Natural killer cell (primary cell): ENCODE measurements at regions of chr15 and their contacts with region 1.

Region 1: DNA sequence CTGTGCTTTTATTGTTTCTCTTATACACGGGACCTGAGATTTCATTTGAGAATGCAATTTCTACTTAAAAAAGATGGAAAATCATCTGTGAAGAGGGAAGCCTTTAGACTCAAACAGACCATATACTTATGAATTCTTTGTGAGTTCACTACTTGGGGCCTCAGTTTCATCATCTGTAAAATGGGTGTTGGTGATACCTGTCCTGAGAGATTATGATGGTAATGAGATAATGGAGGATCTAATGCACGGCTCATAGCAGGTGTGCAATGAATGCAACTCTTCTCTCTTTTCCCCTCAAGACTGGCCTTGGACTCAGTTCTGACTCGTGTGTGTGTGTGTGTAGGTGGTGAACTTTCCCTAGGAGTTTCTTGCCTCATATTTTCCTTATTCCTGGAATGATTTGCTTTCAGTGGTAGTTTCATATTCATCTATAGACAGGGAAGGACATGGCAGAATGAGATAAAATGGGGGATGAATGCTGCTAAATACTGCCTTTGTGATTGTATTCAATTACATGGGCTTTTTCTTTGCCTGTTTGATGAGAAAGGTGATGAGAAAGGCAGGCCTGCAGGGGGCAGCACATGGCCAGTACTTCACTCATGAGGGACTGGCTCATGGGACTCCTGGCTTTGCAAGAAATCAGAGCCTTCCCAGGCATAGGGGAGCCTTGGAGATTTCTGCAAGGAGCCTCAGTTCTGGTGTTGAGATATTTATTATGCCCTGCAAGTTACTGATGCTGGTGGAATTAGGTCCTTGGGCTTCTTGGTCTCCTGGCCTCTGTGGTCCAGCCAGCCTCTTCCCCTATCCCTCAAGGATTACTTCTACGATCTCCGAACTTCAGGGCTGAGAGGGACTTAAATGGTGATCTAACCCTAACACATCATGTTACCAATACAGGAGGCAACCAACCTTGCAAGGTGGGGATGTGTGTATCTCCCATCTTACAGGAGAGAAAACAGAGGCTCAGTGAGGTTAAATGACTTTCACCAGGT is 70.7 kb downstream of the RPLP1 start:
- DNase-seq: peak; percentile 56 to 65
- ATAC-seq: peak; percentile 57 to 70 (median 67)
- H3K4me3 ChIP-seq: no peak overlapping the region
- H3K4me3 Mint-ChIP-seq: no peak overlapping the region
- H3K27ac ChIP-seq: no peak overlapping the region
- H3K27ac Mint-ChIP-seq: no peak overlapping the region
- H3K4me1 ChIP-seq: no peaks in the 10 kb centered on the region
- H3K4me1 Mint-ChIP-seq: peaks cover 0 to 11% of the 10 kb centered on the region in 2 donors
- H3K27me3 ChIP-seq: no peaks in the 10 kb centered on the region
- H3K27me3 Mint-ChIP-seq: peaks cover 16 to 43% of the 10 kb centered on the region in 2 donors
- CTCF ChIP-seq: peak; percentile 60

Region 2: GRCh38 chr15:69060041-69060481 is 463.2 kb before region 1 on chr15:
- intact Hi-C with region 1: no loop called
- DNase-seq: no peak
- ATAC-seq: no peak
- H3K4me3 ChIP-seq: no peak overlapping the region
- H3K4me3 Mint-ChIP-seq: no peak overlapping the region
- H3K27ac ChIP-seq: no peak overlapping the region
- H3K27ac Mint-ChIP-seq: no peak overlapping the region
- H3K4me1 ChIP-seq: peaks cover 6% of the 10 kb centered on the region
- H3K4me1 Mint-ChIP-seq: peaks cover 4 to 10% of the 10 kb centered on the region in 2 donors
- H3K27me3 ChIP-seq: no peaks in the 10 kb centered on the region
- H3K27me3 Mint-ChIP-seq: peaks cover 13 to 14% of the 10 kb centered on the region in 2 donors
- CTCF ChIP-seq: no peak

Region 3: DNA sequence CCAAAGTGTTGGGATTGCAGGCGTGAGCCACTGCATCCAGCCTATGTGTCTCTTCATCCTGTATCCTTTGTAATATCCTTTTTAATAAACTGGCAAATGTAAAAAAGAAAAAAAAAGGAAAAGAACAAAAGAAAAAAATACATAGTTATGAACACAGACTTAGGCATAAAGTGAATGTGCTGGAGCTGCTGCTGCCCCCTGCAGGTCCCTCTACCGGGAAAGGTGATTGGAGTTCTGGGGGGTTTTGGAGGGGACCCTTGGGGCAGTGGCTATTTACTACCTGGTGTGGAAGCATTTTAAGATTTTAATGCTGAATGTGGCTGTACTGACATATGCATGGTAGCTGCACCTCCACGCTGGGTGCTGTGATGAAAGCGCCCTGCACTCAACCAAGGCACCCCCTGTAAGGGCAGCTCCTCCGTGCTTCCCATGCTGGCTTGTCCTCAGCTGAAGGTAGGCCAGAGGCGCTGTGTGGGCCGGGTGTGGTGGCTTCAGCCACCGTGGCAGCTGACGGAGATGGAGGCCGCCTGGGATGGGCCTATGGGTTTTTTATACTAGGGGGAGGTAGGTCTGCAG is 20.7 kb before region 1 on chr15:
- intact Hi-C with region 1: no loop called
- DNase-seq: no peak
- ATAC-seq: no peak
- H3K4me3 ChIP-seq: no peak overlapping the region
- H3K4me3 Mint-ChIP-seq: no peak overlapping the region
- H3K27ac ChIP-seq: no peak overlapping the region
- H3K27ac Mint-ChIP-seq: no peak overlapping the region
- H3K4me1 ChIP-seq: peaks cover 35% of the 10 kb centered on the region
- H3K4me1 Mint-ChIP-seq: peaks cover 45 to 52% of the 10 kb centered on the region in 2 donors
- H3K27me3 ChIP-seq: no peaks in the 10 kb centered on the region
- H3K27me3 Mint-ChIP-seq: no peaks in the 10 kb centered on the region
- CTCF ChIP-seq: no peak

Region 4: DNA sequence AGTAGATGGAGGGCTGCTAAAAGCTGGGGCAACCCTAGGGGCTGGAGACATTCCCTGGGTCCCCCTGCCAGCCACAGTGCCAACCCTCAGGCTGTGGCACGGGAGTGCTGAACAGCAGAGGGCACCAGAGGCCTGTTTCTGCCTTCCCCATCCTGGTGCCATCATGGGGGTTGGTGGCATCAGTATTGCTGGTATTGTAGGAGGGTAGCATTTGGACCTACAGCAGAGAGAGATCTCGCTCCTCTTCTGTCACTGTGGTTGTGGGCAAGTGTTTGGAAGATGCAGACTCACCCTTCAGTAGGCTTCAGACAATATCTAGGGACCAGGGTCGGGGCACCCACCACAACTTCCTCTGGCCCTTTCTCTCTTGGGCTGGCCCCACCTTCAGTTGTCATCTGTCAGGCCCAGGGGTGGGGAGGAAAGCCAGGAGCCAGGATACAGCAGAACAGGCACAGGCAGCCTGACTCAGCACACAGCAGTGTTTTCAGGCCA is 52.8 kb after region 1 on chr15:
- intact Hi-C with region 1: no loop called
- DNase-seq: peak; percentile 61 to 84
- ATAC-seq: peak; percentile 78 to 94 (median 93)
- H3K4me3 ChIP-seq: no peak overlapping the region
- H3K4me3 Mint-ChIP-seq: no peak overlapping the region
- H3K27ac ChIP-seq: no peak overlapping the region
- H3K27ac Mint-ChIP-seq: no peak overlapping the region
- H3K4me1 ChIP-seq: peaks cover 24% of the 10 kb centered on the region
- H3K4me1 Mint-ChIP-seq: peaks cover 9 to 17% of the 10 kb centered on the region in 2 donors
- H3K27me3 ChIP-seq: no peaks in the 10 kb centered on the region
- H3K27me3 Mint-ChIP-seq: peaks cover 34 to 58% of the 10 kb centered on the region in 2 donors
- CTCF ChIP-seq: peak; percentile 69

Region 5: DNA sequence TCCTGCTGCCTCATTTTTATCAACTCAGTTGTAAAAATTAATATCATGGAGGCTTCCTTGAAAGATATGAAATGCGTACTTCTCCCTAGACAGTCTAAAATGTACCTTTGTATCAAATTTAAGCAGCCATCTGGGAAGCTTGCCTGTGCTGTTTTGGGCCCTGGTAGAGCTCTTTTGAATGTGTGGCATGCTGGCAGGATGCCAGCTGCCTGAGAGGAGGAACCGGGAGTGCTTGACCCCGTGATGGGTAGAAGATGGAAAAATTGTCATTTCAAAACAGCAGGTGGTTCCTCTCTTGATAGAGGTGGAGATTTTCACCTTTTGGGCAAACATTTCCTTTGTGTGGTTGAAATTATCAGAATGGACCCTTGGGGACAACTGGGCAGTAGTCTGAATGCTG is 174.6 kb after region 1 on chr15:
- intact Hi-C with region 1: no loop called
- DNase-seq: no peak
- ATAC-seq: no peak
- H3K4me3 ChIP-seq: no peak overlapping the region
- H3K4me3 Mint-ChIP-seq: no peak overlapping the region
- H3K27ac ChIP-seq: no peak overlapping the region
- H3K27ac Mint-ChIP-seq: no peak overlapping the region
- H3K4me1 ChIP-seq: peaks cover 3% of the 10 kb centered on the region
- H3K4me1 Mint-ChIP-seq: peaks cover 0 to 11% of the 10 kb centered on the region in 2 donors
- H3K27me3 ChIP-seq: no peaks in the 10 kb centered on the region
- H3K27me3 Mint-ChIP-seq: peaks cover 13 to 15% of the 10 kb centered on the region in 2 donors
- CTCF ChIP-seq: no peak

Region 6: GRCh38 chr15:70463460-70463881 is 940.2 kb after region 1 on chr15:
- intact Hi-C with region 1: loop called (anchors 1 kb)
- DNase-seq: no peak
- ATAC-seq: no peak
- H3K4me3 ChIP-seq: no peak overlapping the region
- H3K4me3 Mint-ChIP-seq: no peak overlapping the region
- H3K27ac ChIP-seq: no peak overlapping the region
- H3K27ac Mint-ChIP-seq: no peak overlapping the region
- H3K4me1 ChIP-seq: peaks cover 33% of the 10 kb centered on the region
- H3K4me1 Mint-ChIP-seq: peaks cover 15 to 25% of the 10 kb centered on the region in 2 donors
- H3K27me3 ChIP-seq: peaks cover 16% of the 10 kb centered on the region
- H3K27me3 Mint-ChIP-seq: peaks cover 54 to 72% of the 10 kb centered on the region in 2 donors
- CTCF ChIP-seq: no peak